Activated naive CD4-positive, alpha-beta T cell treated with anti-CD3 and anti-CD28 coated beads for 36 hours (primary cell): ENCODE measurements at regions of chr1 and their contacts with region 1.

Region 1: GRCh38 chr1:167553136-167554027 is at the start of gene CREG1:
- DNase-seq: peak; percentile 93
- H3K4me3 Mint-ChIP-seq: peak within 1 kb of the TSS; percentile 79
- H3K27ac Mint-ChIP-seq: no peak within 1 kb of the TSS
- H3K4me1 Mint-ChIP-seq: peaks cover 40% of the 10 kb centered on the region
- H3K27me3 Mint-ChIP-seq: no peaks in the 10 kb centered on the region
- total RNA-seq, gene CREG1: 9.6 to 10.7 TPM

Region 2: DNA sequence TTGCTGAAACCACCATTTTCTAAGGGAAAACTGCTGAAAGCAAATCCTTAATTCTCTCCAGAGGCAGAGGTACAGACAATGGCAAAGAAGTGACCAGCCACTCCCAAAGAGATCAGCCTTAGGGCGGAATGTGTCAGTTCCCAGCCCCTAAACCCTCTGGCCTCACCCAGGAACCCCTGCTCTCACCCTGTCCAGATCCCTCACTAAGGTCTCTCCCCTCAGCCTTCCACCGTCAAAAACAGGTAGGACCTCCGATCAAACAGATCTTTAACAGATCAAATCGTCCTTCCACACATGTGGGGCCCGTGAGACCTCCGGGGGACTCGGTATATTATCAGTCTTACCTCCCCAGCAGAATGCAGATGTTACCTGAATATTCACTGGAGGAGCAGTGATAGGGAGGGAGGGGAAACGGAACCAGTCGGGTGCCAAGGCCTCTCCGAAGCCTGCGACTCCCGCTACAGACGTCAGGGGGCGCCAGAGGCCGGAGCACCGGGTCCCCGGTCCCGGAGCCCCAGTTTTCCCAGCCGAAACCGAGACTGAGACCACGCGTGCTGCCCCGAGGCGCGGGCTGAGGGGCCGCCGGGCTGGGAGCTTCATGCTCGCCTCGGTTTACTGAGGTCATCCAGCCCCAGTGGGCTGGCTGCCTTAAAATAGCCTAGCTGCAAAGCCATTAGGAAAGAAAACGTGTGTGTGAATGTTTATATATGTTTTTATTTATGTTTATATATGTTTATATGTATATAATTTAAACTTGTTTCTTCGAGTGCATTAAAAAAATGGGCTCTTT is 486.9 kb before region 1 on chr1:
- CTCF ChIA-PET with region 1: interaction called, 3 read pairs
- intact Hi-C with region 1: loop called (anchors 1 kb)
- DNase-seq: peak; percentile 82
- H3K4me3 Mint-ChIP-seq: no peak overlapping the region
- H3K27ac Mint-ChIP-seq: no peak overlapping the region
- H3K4me1 Mint-ChIP-seq: peaks cover 2% of the 10 kb centered on the region
- H3K27me3 Mint-ChIP-seq: no peaks in the 10 kb centered on the region

Region 3: DNA sequence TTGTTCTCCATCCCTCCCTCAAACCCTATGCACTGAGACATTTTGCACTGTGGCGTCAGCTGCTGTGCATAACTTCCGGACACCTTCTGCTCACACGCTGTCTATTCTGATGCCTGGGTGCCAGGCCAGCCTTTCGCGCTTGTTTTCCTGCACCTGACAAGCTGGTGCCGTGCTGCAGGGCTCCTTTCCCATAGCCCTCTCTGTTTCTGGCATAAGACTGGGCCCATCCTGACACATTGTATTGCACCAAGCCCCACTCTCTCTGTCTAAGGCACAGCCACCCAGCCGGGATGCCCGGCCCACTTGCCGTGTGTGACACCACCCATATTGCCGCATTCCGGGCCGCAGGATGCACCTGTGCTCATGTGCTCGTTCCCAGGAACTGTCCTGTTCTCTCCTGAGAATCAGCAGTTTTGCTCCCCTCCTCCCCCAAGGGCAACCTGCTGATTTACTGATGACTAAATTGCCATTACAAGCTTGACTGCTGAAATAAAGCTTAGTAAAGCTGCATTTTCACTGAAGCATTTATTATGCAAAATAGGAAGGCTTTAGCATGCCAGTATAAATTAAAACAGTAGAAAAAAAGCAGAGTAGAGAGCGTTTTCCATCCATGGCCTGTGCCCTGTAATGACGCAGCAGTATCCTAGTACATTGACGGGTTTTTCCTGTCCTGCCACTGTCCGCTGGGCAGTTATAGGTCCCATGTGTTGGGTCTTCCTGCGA is 123.1 kb before region 1 on chr1:
- CTCF ChIA-PET with region 1: no interaction called
- intact Hi-C with region 1: no loop called
- DNase-seq: no peak
- H3K4me3 Mint-ChIP-seq: no peak overlapping the region
- H3K27ac Mint-ChIP-seq: peak overlapping the region; percentile 74
- H3K4me1 Mint-ChIP-seq: peaks cover 50% of the 10 kb centered on the region
- H3K27me3 Mint-ChIP-seq: no peaks in the 10 kb centered on the region

Region 4: GRCh38 chr1:167447521-167448136 is 105.8 kb before region 1 on chr1:
- CTCF ChIA-PET with region 1: interaction called, 3 read pairs
- intact Hi-C with region 1: loop called (anchors 1 kb)
- DNase-seq: peak; percentile 93
- H3K4me3 Mint-ChIP-seq: peak overlapping the region; percentile 53
- H3K27ac Mint-ChIP-seq: peak overlapping the region; percentile 91
- H3K4me1 Mint-ChIP-seq: peaks cover 76% of the 10 kb centered on the region
- H3K27me3 Mint-ChIP-seq: no peaks in the 10 kb centered on the region

Region 5: GRCh38 chr1:167542109-167543032 is 11.0 kb before region 1 on chr1:
- CTCF ChIA-PET with region 1: interaction called, 30 read pairs
- intact Hi-C with region 1: loop called (anchors 1 kb)
- DNase-seq: no peak
- H3K4me3 Mint-ChIP-seq: no peak overlapping the region
- H3K27ac Mint-ChIP-seq: no peak overlapping the region
- H3K4me1 Mint-ChIP-seq: peaks cover 34% of the 10 kb centered on the region
- H3K27me3 Mint-ChIP-seq: no peaks in the 10 kb centered on the region

Region 6: DNA sequence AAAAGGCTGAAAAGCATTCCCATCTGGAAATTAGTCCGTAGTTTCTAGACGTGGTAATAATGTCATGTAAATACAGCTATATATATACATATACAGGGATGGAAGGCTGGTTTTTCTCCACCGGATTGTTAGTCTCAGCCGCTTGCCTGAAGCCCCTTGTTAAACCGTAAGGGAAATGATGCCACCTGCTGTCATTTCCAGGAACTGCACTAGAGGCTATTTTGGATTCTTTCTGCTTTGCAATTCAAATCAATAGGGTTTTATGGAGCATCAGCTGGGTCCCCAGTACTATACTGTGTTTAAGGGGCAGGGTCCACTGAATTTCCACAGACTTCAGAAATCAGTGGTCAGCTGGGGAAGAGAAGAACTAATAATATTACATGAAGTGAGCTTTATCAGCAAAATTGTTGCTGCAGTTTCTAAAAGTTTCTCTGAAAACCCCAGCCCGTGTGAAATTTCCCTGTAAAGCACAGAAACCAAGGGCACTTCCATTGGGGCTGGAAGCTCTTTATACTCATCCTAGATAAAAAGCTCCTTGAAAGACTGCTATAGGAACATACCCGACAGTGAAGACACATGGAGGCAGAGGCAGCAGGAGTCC is 134.6 kb after region 1 on chr1:
- CTCF ChIA-PET with region 1: interaction called, 22 read pairs
- intact Hi-C with region 1: loop called (anchors 1 kb)
- DNase-seq: peak; percentile 94
- H3K4me3 Mint-ChIP-seq: no peak overlapping the region
- H3K27ac Mint-ChIP-seq: peak overlapping the region; percentile 62
- H3K4me1 Mint-ChIP-seq: peaks cover 11% of the 10 kb centered on the region
- H3K27me3 Mint-ChIP-seq: no peaks in the 10 kb centered on the region